GM12878 (cell line): ENCODE measurements at regions of chr4 and their contacts with region 1.

Region 1: DNA sequence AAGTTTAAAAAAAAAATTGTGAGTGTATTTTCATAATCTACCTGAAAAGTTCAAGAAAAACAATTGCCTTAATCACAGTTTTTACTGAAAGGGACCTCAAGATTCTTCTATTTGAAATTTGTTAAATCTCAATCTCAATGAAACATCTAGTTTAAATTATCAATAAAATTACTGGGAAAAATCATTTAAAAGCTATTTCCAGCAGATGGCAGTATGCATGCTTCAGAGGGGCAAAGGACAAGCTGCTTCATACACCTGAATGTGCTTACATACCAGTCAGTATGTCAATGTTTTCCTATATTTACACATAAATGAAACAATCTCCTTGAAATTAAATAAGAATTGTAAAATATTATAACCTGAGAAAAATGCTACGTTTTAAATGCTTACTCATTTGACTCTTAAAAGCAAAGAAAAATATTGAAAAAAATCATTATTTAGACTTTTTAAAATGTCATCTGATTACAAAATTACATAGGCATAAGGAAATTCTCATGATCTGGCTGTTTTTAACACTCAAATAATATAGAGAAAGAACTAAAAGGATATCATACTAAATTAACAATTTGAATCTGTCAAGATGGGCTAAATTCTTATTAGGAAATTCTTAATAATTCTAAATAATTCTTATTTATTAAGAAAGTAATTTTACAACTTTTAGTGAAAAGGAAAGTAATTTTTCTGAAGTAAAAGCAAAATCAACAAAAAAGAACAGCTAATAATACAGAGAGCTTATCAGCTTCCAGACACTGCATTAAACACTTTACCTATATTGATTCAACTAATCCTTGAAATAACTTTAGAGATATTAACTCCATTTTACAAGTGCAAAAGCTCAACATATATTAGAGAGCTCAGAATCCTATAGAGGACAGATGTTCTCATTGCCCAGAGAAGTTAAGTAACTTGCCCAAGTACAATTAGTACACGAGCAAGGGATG is 242.1 kb downstream of the ADAMTS3 start:
- DNase-seq: no peak
- ATAC-seq: peak; percentile 48; the same call in 2 of the 3 replicates
- H3K4me3 ChIP-seq: no peak overlapping the region
- H3K27ac ChIP-seq: no peak overlapping the region
- H3K4me1 ChIP-seq: no peaks in the 10 kb centered on the region
- H3K27me3 ChIP-seq: no peaks in the 10 kb centered on the region
- CTCF ChIP-seq: peak; percentile 31 to 43 (median 38); a peak in 4 of 6 replicates
- EP300 ChIP-seq: no peak
- POLR2A ChIP-seq: no peak
- RAD21 ChIP-seq: peak; percentile 47

Region 2: GRCh38 chr4:71913275-71913674 is 413.7 kb before region 1 on chr4:
- CTCF ChIA-PET with region 1: no interaction called
- POLR2A ChIA-PET with region 1: no interaction called
- RAD21 ChIA-PET with region 1: no interaction called
- SMC1A ChIA-PET with region 1: no interaction called
- in situ Hi-C with region 1: no loop called
- intact Hi-C with region 1: no loop called
- DNase-seq: no peak
- ATAC-seq: no peak
- H3K4me3 ChIP-seq: no peak overlapping the region
- H3K27ac ChIP-seq: no peak overlapping the region
- H3K4me1 ChIP-seq: no peaks in the 10 kb centered on the region
- H3K27me3 ChIP-seq: no peaks in the 10 kb centered on the region
- CTCF ChIP-seq: no peak
- EP300 ChIP-seq: no peak
- POLR2A ChIP-seq: no peak
- RAD21 ChIP-seq: no peak

Region 3: DNA sequence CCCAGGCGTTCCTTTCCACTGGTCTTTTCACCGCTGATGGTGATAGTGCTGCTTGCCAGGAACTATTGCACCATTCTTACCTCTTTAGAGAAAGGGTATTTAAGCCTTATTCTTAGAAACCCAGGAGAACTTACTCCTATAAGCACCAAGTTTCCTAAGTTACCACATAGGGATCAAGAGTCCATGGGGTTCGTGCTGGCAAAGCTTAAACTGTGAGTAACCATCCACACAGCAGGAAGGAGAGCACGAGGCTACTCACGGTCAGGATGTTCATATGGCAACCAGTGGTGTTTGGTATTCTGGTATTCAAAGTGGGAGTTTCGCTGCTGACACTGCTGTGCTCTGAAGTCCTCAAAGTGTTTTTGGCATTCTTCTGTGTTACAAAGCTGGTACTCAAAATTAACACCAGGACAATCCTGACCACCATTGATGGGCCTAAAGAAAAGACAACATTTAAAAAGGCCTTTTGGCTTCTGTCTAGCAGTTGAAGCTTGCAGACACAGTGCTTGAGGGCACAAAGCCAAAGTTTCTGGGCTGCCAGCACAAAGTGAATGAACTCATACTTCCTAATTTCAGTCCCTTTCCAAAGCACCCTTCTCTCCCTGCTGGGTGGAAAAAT is 14.8 kb before region 1 on chr4:
- CTCF ChIA-PET with region 1: interaction called, 11 read pairs
- POLR2A ChIA-PET with region 1: no interaction called
- RAD21 ChIA-PET with region 1: no interaction called
- SMC1A ChIA-PET with region 1: interaction called, 6 read pairs
- in situ Hi-C with region 1: no loop called
- intact Hi-C with region 1: no loop called
- DNase-seq: no peak
- ATAC-seq: peak; percentile 51; the same call in 2 of the 3 replicates
- H3K4me3 ChIP-seq: no peak overlapping the region
- H3K27ac ChIP-seq: no peak overlapping the region
- H3K4me1 ChIP-seq: no peaks in the 10 kb centered on the region
- H3K27me3 ChIP-seq: no peaks in the 10 kb centered on the region
- CTCF ChIP-seq: no peak
- EP300 ChIP-seq: no peak
- POLR2A ChIP-seq: no peak
- RAD21 ChIP-seq: no peak

Region 4: GRCh38 chr4:72340803-72341431 is 14.0 kb after region 1 on chr4:
- CTCF ChIA-PET with region 1: interaction called, 11 read pairs
- POLR2A ChIA-PET with region 1: no interaction called
- RAD21 ChIA-PET with region 1: interaction called, 4 read pairs
- SMC1A ChIA-PET with region 1: interaction called, 3 read pairs
- in situ Hi-C with region 1: no loop called
- intact Hi-C with region 1: no loop called
- DNase-seq: no peak
- ATAC-seq: no peak
- H3K4me3 ChIP-seq: no peak overlapping the region
- H3K27ac ChIP-seq: no peak overlapping the region
- H3K4me1 ChIP-seq: no peaks in the 10 kb centered on the region
- H3K27me3 ChIP-seq: no peaks in the 10 kb centered on the region
- CTCF ChIP-seq: no peak
- EP300 ChIP-seq: no peak
- POLR2A ChIP-seq: no peak
- RAD21 ChIP-seq: no peak

Region 5: GRCh38 chr4:72468904-72469502 is 142.0 kb after region 1 on chr4:
- CTCF ChIA-PET with region 1: interaction called, 12 read pairs
- POLR2A ChIA-PET with region 1: no interaction called
- RAD21 ChIA-PET with region 1: interaction called, 5 read pairs
- SMC1A ChIA-PET with region 1: interaction called, 5 read pairs
- in situ Hi-C with region 1: no loop called
- intact Hi-C with region 1: loop called (anchors 1 kb)
- DNase-seq: no peak
- ATAC-seq: no peak
- H3K4me3 ChIP-seq: no peak overlapping the region
- H3K27ac ChIP-seq: no peak overlapping the region
- H3K4me1 ChIP-seq: no peaks in the 10 kb centered on the region
- H3K27me3 ChIP-seq: no peaks in the 10 kb centered on the region
- CTCF ChIP-seq: peak in 2 of 3 experiments; percentile 30 to 44; a peak in 4 of 6 replicates
- EP300 ChIP-seq: no peak
- POLR2A ChIP-seq: no peak
- RAD21 ChIP-seq: peak; percentile 22; the same call in 1 of the 2 replicates

Region 6: DNA sequence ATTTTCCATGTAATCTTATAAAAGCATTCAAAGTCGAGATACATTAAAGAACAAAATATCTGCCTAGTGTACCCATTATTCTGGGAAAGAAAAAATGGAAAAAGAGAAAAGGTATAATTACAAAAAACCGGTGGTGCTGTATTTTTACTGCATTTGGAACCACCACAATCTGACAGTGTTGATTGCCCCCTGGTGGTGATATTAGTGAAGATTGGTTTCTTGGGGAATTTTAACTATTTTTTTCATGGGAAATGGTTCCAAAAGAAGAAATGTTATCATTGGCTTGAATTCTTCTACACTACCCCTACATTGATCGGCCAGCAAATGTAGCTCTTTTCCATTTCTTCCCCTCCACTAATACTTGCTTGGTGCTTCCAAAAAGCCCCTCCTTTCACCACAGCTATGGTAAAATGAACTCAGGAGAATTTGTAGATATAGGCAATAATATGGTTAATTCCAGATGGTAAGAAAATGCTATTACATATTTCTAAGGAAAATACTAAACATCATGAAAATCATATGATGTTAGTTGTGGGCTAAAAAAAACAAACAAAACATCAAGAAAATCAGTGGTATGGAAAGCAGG is 692.6 kb after region 1 on chr4:
- CTCF ChIA-PET with region 1: interaction called, 9 read pairs
- POLR2A ChIA-PET with region 1: no interaction called
- RAD21 ChIA-PET with region 1: interaction called, 4 read pairs
- SMC1A ChIA-PET with region 1: interaction called, 5 read pairs
- in situ Hi-C with region 1: loop called (anchors 25 kb)
- intact Hi-C with region 1: loop called (anchors 2 kb)
- DNase-seq: no peak
- ATAC-seq: peak; percentile 48; the same call in 1 of the 3 replicates
- H3K4me3 ChIP-seq: no peak overlapping the region
- H3K27ac ChIP-seq: no peak overlapping the region
- H3K4me1 ChIP-seq: no peaks in the 10 kb centered on the region
- H3K27me3 ChIP-seq: no peaks in the 10 kb centered on the region
- CTCF ChIP-seq: peak; percentile 42 to 67 (median 65); a peak in 5 of 6 replicates
- EP300 ChIP-seq: no peak
- POLR2A ChIP-seq: no peak
- RAD21 ChIP-seq: peak; percentile 87